GM23248 (cell line): ENCODE measurements at regions of chr1 and their contacts with region 1.

Region 1: GRCh38 chr1:228013935-228014930 is 7.4 kb downstream of the WNT3A start:
- DNase-seq: no peak
- H3K4me3 ChIP-seq: no peak overlapping the region
- H3K27ac ChIP-seq: no peak overlapping the region
- H3K4me1 ChIP-seq: 0 out of 2 replicates have a peak, but pooled peaks cover 4% of the 10 kb centered on the region
- H3K27me3 ChIP-seq: peaks cover 17% of the 10 kb centered on the region

Region 2: GRCh38 chr1:228073857-228074545 is 59.8 kb after region 1 on chr1:
- in situ Hi-C with region 1: loop called (anchors 10 kb)
- DNase-seq: no peak
- H3K4me3 ChIP-seq: no peak overlapping the region
- H3K27ac ChIP-seq: no peak overlapping the region
- H3K4me1 ChIP-seq: no peaks in the 10 kb centered on the region
- H3K27me3 ChIP-seq: no peaks in the 10 kb centered on the region